Activated CD4-positive, alpha-beta T cell treated with anti-CD3 and anti-CD28 coated beads for 36 hours (primary cell): ENCODE measurements at regions of chr6 and their contacts with region 1.

Region 1: GRCh38 chr6:135423649-135424128 is 73.9 kb downstream of the AHI1 start:
- DNase-seq: no peak
- ATAC-seq: peak; percentile 78
- H3K4me3 Mint-ChIP-seq: no peak overlapping the region
- H3K27ac Mint-ChIP-seq: no peak overlapping the region
- H3K4me1 Mint-ChIP-seq: peaks cover 5% of the 10 kb centered on the region
- H3K27me3 Mint-ChIP-seq: no peaks in the 10 kb centered on the region

Region 2: GRCh38 chr6:134152767-134153485 is 1270.8 kb before region 1 on chr6:
- CTCF ChIA-PET with region 1: no interaction called
- POLR2A ChIA-PET with region 1: no interaction called
- intact Hi-C with region 1: loop called in 1 of 2 experiments (anchors 10 kb)
- DNase-seq: no peak
- ATAC-seq: no peak
- H3K4me3 Mint-ChIP-seq: no peak overlapping the region
- H3K27ac Mint-ChIP-seq: no peak overlapping the region
- H3K4me1 Mint-ChIP-seq: no peaks in the 10 kb centered on the region
- H3K27me3 Mint-ChIP-seq: no peaks in the 10 kb centered on the region

Region 3: DNA sequence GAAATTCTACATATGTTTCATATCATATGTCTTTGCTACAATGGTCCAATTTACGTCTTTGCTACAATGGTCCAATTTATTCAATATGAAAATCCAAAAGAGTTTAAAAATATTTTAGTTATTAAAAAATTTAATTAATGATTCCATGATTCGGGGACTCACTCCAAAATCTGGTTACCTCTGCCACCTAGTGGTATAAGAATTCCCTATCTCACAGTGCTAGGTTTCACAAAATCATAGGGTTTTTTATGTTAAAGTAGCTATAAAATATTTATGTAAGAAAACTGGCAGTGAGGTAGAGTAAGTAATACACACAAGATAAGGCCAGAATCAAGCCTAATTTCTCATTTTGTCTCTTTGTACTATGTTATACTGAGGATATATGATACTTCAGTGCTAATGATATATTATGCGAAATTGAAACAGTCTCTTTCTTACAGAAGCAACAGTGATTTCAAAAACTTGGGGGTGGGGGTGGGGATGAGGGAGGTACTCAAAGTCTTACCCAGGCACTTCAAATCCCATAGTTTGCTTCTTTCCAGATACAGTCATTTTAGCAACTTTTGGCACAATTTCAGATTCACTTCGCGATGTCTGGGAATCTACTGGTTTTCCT is 421.4 kb before region 1 on chr6:
- CTCF ChIA-PET with region 1: no interaction called
- POLR2A ChIA-PET with region 1: no interaction called
- intact Hi-C with region 1: loop called in 1 of 2 experiments (anchors 10 kb)
- DNase-seq: no peak
- ATAC-seq: no peak
- H3K4me3 Mint-ChIP-seq: no peak overlapping the region
- H3K27ac Mint-ChIP-seq: no peak overlapping the region
- H3K4me1 Mint-ChIP-seq: peaks cover 18% of the 10 kb centered on the region
- H3K27me3 Mint-ChIP-seq: no peaks in the 10 kb centered on the region

Region 4: GRCh38 chr6:135191508-135192255 is 232.0 kb before region 1 on chr6:
- CTCF ChIA-PET with region 1: no interaction called
- POLR2A ChIA-PET with region 1: no interaction called
- intact Hi-C with region 1: loop called (anchors 5 to 10 kb)
- DNase-seq: no peak
- ATAC-seq: no peak
- H3K4me3 Mint-ChIP-seq: no peak overlapping the region
- H3K27ac Mint-ChIP-seq: no peak overlapping the region
- H3K4me1 Mint-ChIP-seq: peaks cover 12% of the 10 kb centered on the region
- H3K27me3 Mint-ChIP-seq: no peaks in the 10 kb centered on the region